Naive thymus-derived CD4-positive, alpha-beta T cell (primary cell): ENCODE measurements at regions of chr2 and their contacts with region 1.

Region 1: GRCh38 chr2:27191053-27191829 is 20.6 kb upstream of the ATRAID start:
- DNase-seq: peak in 7 of 9 donors; percentile 28 to 60 (median 51)
- ATAC-seq: peak; percentile 85
- H3K4me3 ChIP-seq: no peak overlapping the region
- H3K4me3 Mint-ChIP-seq: no peak overlapping the region
- H3K27ac ChIP-seq: no peak overlapping the region
- H3K27ac Mint-ChIP-seq: no peak overlapping the region
- H3K4me1 ChIP-seq: no peaks in the 10 kb centered on the region
- H3K4me1 Mint-ChIP-seq: peaks cover 0 to 2% (median 0%) of the 10 kb centered on the region in 7 donors
- H3K27me3 ChIP-seq: no peaks in the 10 kb centered on the region
- H3K27me3 Mint-ChIP-seq: peaks cover 0 to 15% (median 4%) of the 10 kb centered on the region in 5 donors

Region 2: GRCh38 chr2:26959331-26959730 is 231.9 kb before region 1 on chr2:
- CTCF ChIA-PET with region 1: interaction called, 14 read pairs
- POLR2A ChIA-PET with region 1: no interaction called
- intact Hi-C with region 1: loop called in 1 of 2 experiments (anchors 1 kb)
- DNase-seq: no peak
- ATAC-seq: no peak
- H3K4me3 ChIP-seq: no peak overlapping the region
- H3K4me3 Mint-ChIP-seq: no peak overlapping the region
- H3K27ac ChIP-seq: no peak overlapping the region
- H3K27ac Mint-ChIP-seq: peak overlapping the region in 1 of 9 donors; percentile 14
- H3K4me1 ChIP-seq: no peaks in the 10 kb centered on the region
- H3K4me1 Mint-ChIP-seq: peaks cover 0 to 8% (median 0%) of the 10 kb centered on the region in 7 donors
- H3K27me3 ChIP-seq: no peaks in the 10 kb centered on the region
- H3K27me3 Mint-ChIP-seq: peaks cover 9 to 52% (median 35%) of the 10 kb centered on the region in 5 donors

Region 3: DNA sequence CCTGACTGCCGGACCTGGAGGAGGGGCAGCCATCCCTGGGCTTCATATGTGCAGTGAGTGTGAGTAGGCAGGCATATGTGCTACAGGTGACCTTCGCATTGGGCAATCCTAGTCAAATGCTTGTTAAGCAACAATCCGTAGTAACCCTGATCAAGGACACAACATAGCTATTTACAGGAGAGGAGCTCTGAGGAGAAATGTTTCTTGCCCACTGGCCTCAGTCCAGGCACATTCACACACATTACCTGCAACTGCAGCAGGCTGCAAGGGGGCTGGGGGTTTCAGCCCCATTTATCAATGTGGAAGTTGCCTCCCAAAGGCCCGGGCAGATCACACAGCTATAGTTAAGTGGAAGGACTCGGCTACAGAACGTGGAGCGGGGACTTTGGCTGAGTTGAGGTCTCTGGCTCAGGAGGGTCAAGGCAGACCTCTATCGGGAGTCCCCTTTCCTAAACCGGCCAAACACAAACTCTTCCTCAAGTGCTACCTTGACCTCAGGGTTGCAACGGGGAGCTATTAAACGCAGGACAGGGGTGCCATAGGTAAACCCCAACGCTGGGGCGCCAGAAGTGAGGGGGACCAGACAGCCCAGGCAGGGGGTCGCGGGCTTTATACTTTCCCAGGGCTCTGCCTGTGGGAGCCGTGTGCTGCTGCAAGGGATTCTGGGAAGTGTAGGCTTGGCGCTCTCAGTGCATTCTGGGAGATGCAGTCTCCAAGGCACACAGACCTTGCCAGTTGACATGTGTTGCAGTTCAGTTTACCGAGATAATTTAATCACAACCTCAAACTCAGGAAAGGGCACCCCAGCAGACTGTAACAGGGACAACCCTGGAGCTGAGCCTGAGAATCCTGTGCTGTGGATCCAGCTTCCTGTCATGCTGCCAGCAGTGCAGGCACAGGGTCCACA is 95.2 kb before region 1 on chr2:
- CTCF ChIA-PET with region 1: interaction called, 11 read pairs
- POLR2A ChIA-PET with region 1: no interaction called
- intact Hi-C with region 1: loop called (anchors 1 kb)
- DNase-seq: peak in 4 of 9 donors; percentile 21 to 44 (median 39)
- ATAC-seq: peak; percentile 80
- H3K4me3 ChIP-seq: peak overlapping the region; percentile 25
- H3K4me3 Mint-ChIP-seq: peak overlapping the region in 9 of 10 donors; percentile 29 to 76 (median 67)
- H3K27ac ChIP-seq: no peak overlapping the region
- H3K27ac Mint-ChIP-seq: peak overlapping the region in 2 of 9 donors; percentile 25 to 41
- H3K4me1 ChIP-seq: peaks cover 0 to 4% of the 10 kb centered on the region in 2 donors
- H3K4me1 Mint-ChIP-seq: peaks cover 9 to 16% (median 11%) of the 10 kb centered on the region in 7 donors
- H3K27me3 ChIP-seq: no peaks in the 10 kb centered on the region
- H3K27me3 Mint-ChIP-seq: no peaks in the 10 kb centered on the region

Region 4: DNA sequence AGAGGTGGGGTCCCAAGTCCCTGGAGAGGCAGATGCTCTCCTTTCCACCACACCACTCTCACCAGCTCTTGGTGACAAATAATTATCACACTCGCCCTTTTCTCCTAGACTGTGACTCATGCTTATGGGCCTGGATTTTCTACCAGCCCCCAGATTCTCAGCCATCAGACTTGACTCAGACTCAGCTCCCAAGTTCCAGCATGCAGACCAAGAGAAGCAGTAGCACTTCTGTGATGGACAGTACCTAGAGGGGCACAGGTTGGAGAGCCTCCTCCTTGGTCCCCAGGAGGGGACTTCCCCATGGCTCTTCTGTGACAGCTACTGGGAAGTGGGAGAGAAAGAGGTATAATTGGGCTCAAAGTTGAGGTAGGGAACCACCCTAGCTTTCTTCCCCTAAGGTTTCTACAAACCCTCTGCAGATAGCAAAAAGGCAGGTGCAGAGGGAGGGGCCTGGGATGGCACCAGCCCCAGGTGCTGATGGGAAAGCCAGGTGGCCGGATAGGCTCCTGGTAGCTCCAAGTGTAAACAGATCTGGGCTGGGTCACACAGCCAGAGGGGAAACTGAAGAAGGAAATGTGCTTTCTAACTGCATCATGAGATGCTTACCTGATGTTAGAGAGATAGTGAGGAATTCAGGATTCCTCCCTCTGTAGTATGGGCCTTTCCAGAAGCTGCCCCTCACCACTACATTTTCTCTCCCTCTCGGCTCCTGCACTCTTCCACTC is 38.3 kb before region 1 on chr2:
- CTCF ChIA-PET with region 1: no interaction called
- POLR2A ChIA-PET with region 1: no interaction called
- intact Hi-C with region 1: no loop called
- DNase-seq: no peak
- ATAC-seq: no peak
- H3K4me3 ChIP-seq: no peak overlapping the region
- H3K4me3 Mint-ChIP-seq: no peak overlapping the region
- H3K27ac ChIP-seq: no peak overlapping the region
- H3K27ac Mint-ChIP-seq: no peak overlapping the region
- H3K4me1 ChIP-seq: no peaks in the 10 kb centered on the region
- H3K4me1 Mint-ChIP-seq: no peaks in the 10 kb centered on the region
- H3K27me3 ChIP-seq: no peaks in the 10 kb centered on the region
- H3K27me3 Mint-ChIP-seq: peaks cover 0 to 6% (median under 1%) of the 10 kb centered on the region in 5 donors